Ascending aorta (tissue), 2 donors: ENCODE measurements at regions of chr4 and their contacts with region 1.

Region 1: GRCh38 chr4:75653845-75654503 is 19.2 kb downstream of the G3BP2 start:
- DNase-seq: no peak
- H3K4me3 ChIP-seq: no peak overlapping the region
- H3K27ac ChIP-seq: no peak overlapping the region
- H3K4me1 ChIP-seq: no peaks in the 10 kb centered on the region
- H3K27me3 ChIP-seq: no peaks in the 10 kb centered on the region
- CTCF ChIP-seq: peak in 2 of 3 experiments; percentile 19 to 46

Region 2: GRCh38 chr4:75673027-75673958 is 19.3 kb after region 1 on chr4 and contains the start of gene G3BP2:
- intact Hi-C with region 1: no loop called
- DNase-seq: peak; percentile 94 to 99
- H3K4me3 ChIP-seq: peak within 1 kb of the TSS; percentile 92 to 99
- H3K27ac ChIP-seq: peak within 1 kb of the TSS; percentile 99 to 100
- H3K4me1 ChIP-seq: peaks cover 3 to 24% of the 10 kb centered on the region in 2 donors
- H3K27me3 ChIP-seq: no peaks in the 10 kb centered on the region
- CTCF ChIP-seq: no peak
- total RNA-seq, gene G3BP2: 88.9 TPM

Region 3: GRCh38 chr4:75786526-75786925 is 132.6 kb after region 1 on chr4:
- intact Hi-C with region 1: loop called (anchors 10 kb)
- DNase-seq: no peak
- H3K4me3 ChIP-seq: no peak overlapping the region
- H3K27ac ChIP-seq: no peak overlapping the region
- H3K4me1 ChIP-seq: no peaks in the 10 kb centered on the region
- H3K27me3 ChIP-seq: no peaks in the 10 kb centered on the region
- CTCF ChIP-seq: no peak

Region 4: DNA sequence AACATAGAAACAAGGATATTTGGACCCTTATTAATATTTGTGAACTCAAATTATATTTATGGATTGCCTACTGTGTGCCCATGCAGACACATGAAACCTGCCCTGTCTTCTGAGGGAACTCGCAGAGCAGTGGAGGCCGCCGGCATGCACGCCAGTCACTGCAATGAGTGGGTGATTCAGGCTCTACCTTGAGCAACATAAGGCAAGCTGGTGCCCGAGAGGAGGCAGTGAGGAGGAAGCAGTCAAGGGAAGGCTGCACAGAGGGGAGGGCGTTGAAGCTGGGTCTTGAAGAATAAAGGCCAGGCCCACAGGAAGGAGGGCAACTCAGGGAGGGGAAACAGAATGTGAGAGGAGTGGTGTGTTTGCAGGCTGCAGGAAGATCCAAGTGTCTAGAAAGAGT is 195.5 kb after region 1 on chr4:
- intact Hi-C with region 1: loop called (anchors 5 kb)
- DNase-seq: no peak
- H3K4me3 ChIP-seq: no peak overlapping the region
- H3K27ac ChIP-seq: no peak overlapping the region
- H3K4me1 ChIP-seq: peaks cover 0 to 2% of the 10 kb centered on the region in 2 donors
- H3K27me3 ChIP-seq: no peaks in the 10 kb centered on the region
- CTCF ChIP-seq: no peak